Activated CD4-positive, alpha-beta T cell treated with anti-CD3 and anti-CD28 coated beads, Interleukin-2, amount 10 ng/mL, durations not matched to agents 7 days and 5 days (primary cell): ENCODE measurements at regions of chr19 and their contacts with region 1.

Region 1: DNA sequence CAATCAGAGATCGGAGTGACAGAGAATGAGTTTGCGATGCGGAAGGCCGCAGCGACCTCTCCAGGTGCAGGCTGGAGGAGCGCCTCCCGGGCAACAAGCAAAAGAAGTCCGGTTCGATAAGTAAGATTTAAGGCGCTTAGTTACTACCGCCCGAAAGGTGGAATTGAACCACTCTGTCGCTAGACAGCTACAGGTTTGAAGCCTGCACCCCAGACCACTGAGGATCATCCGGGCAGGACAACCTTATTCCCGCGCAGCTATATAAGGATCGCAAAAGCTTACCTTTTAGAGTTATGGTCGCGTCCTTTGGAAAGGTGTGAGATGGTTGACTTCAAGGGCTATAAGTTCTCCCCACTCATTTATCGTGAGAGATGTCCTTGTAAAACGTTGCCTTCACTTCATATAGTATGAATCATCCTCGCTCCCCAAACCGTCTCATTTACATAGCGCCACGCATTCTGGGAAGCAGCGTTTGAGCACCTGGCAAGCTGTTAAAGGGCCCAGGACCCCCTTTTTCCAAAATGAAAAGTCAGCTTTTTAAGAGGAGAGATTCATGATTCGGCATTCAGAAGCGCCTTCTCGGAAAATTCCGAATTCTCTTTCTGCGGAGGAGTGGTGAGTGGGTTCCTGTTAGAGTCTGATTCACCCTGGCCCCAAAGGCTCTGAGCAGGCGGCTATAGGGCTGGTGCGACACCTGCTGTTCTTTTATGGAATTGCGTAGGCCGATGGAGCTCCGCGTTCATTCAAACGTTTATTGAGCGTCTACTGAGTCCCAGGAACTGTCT is 10.8 kb downstream of the FOSB start:
- DNase-seq: peak; percentile 91
- H3K4me3 Mint-ChIP-seq: peak overlapping the region; percentile 81
- H3K27ac Mint-ChIP-seq: peak overlapping the region; percentile 98
- H3K4me1 Mint-ChIP-seq: peaks cover 44% of the 10 kb centered on the region
- H3K27me3 Mint-ChIP-seq: peaks cover 30% of the 10 kb centered on the region

Region 2: GRCh38 chr19:45391871-45392665 is 86.6 kb before region 1 on chr19:
- CTCF ChIA-PET with region 1: no interaction called
- POLR2A ChIA-PET with region 1: no interaction called
- DNase-seq: no peak
- H3K4me3 Mint-ChIP-seq: no peak overlapping the region
- H3K27ac Mint-ChIP-seq: no peak overlapping the region
- H3K4me1 Mint-ChIP-seq: peaks cover 5% of the 10 kb centered on the region
- H3K27me3 Mint-ChIP-seq: peaks cover 12% of the 10 kb centered on the region

Region 3: GRCh38 chr19:45405435-45406225 is 73.0 kb before region 1 on chr19:
- CTCF ChIA-PET with region 1: interaction called, 32 read pairs
- POLR2A ChIA-PET with region 1: no interaction called
- DNase-seq: peak; percentile 88
- H3K4me3 Mint-ChIP-seq: peak overlapping the region; percentile 85
- H3K27ac Mint-ChIP-seq: peak overlapping the region; percentile 95
- H3K4me1 Mint-ChIP-seq: peaks cover 43% of the 10 kb centered on the region
- H3K27me3 Mint-ChIP-seq: peaks cover 19% of the 10 kb centered on the region

Region 4: DNA sequence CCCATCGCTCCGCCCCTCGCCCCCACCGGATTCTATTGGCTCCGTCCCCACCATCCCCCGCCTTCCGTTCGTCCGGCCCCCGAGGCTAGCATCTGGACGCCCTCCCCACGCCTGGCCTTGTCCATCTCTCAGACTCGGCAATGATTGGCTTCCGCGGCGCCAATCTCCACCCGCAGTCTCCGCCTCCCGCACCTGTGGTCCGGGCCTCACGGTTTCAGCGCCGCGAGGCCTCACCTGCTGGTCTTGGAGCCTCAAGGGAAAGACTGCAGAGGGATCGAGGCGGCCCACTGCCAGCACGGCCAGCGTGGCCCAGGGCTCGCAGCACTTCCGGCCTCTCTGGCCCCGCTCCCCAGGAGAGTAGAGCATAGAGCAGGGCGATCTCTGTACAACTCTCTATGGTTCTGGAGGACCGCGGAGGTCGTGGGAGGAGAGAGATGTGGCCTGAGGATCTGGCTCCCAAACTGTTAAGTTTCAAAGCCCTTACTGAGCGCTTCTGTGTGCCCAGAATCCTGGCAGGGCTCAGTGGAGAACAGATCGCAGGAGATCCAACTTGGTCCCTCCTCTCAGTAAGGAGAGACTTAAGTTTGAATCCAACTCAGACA is 55.0 kb before region 1 on chr19 and contains the start of gene ERCC1:
- CTCF ChIA-PET with region 1: interaction called, 31 read pairs
- POLR2A ChIA-PET with region 1: no interaction called
- DNase-seq: peak; percentile 89
- H3K4me3 Mint-ChIP-seq: peak within 1 kb of the TSS; percentile 85
- H3K27ac Mint-ChIP-seq: peak within 1 kb of the TSS; percentile 86
- H3K4me1 Mint-ChIP-seq: peaks cover 65% of the 10 kb centered on the region
- H3K27me3 Mint-ChIP-seq: peaks cover 7% of the 10 kb centered on the region
- total RNA-seq, gene ERCC1: 59.9 to 66.1 TPM

Region 5: GRCh38 chr19:45450012-45450333 is 28.7 kb before region 1 on chr19:
- CTCF ChIA-PET with region 1: interaction called, 28 read pairs
- POLR2A ChIA-PET with region 1: interaction called, 3 read pairs
- DNase-seq: peak; percentile 28
- H3K4me3 Mint-ChIP-seq: peak overlapping the region; percentile 90
- H3K27ac Mint-ChIP-seq: peak overlapping the region; percentile 98
- H3K4me1 Mint-ChIP-seq: peaks cover 43% of the 10 kb centered on the region
- H3K27me3 Mint-ChIP-seq: no peaks in the 10 kb centered on the region

Region 6: DNA sequence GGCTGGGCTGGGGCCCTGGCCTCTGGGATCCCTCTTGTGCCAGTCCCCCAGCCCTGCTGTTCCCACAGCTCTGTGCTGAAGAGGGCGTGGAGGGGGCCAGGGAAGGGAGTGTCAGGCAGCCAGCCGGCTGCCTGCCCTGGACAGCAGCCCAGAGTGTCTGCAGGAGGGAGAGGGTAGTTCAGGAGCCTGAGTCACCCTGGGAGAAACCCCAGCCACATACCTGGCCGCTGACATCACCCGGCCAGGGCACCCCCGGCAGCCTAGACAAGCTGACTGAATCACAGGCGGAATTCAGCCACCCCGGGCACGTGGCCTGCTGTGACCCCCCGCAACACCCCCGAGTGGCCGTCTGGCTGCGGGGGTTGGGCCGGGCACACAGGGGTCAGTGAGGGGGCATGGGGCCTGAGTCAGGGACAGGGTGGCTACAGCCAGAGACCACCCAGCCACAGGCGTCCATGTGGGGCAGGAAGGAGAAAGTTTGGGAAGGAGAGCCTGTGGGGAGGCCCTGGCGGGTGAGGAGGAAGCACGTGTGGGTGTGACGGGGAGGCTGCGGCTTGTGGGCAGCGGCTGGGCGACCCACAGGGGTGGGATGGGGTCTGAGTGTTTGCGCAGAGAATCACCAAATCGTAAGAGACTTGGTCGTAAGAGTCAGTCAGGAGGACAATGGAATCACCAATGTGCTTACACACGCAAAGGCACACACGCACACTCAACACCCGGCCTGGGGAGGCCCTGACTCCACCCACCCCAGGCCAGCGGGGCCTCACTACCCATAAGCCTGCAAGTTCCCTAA is 22.7 kb before region 1 on chr19:
- CTCF ChIA-PET with region 1: interaction called, 28 read pairs
- POLR2A ChIA-PET with region 1: no interaction called
- DNase-seq: no peak
- H3K4me3 Mint-ChIP-seq: no peak overlapping the region
- H3K27ac Mint-ChIP-seq: no peak overlapping the region
- H3K4me1 Mint-ChIP-seq: peaks cover 28% of the 10 kb centered on the region
- H3K27me3 Mint-ChIP-seq: peaks cover 4% of the 10 kb centered on the region

Region 7: GRCh38 chr19:45496349-45496953 is 17.8 kb after region 1 on chr19:
- CTCF ChIA-PET with region 1: interaction called, 26 read pairs
- POLR2A ChIA-PET with region 1: no interaction called
- DNase-seq: peak; percentile 55
- H3K4me3 Mint-ChIP-seq: peak overlapping the region; percentile 50
- H3K27ac Mint-ChIP-seq: no peak overlapping the region
- H3K4me1 Mint-ChIP-seq: peaks cover 43% of the 10 kb centered on the region
- H3K27me3 Mint-ChIP-seq: peaks cover 35% of the 10 kb centered on the region

Region 8: GRCh38 chr19:45558399-45558878 is 79.8 kb after region 1 on chr19:
- CTCF ChIA-PET with region 1: interaction called, 10 read pairs
- POLR2A ChIA-PET with region 1: no interaction called
- DNase-seq: peak; percentile 83
- H3K4me3 Mint-ChIP-seq: no peak overlapping the region
- H3K27ac Mint-ChIP-seq: no peak overlapping the region
- H3K4me1 Mint-ChIP-seq: peaks cover 24% of the 10 kb centered on the region
- H3K27me3 Mint-ChIP-seq: no peaks in the 10 kb centered on the region

Region 9: GRCh38 chr19:45577111-45577905 is 98.7 kb after region 1 on chr19:
- CTCF ChIA-PET with region 1: no interaction called
- POLR2A ChIA-PET with region 1: no interaction called
- DNase-seq: no peak
- H3K4me3 Mint-ChIP-seq: no peak overlapping the region
- H3K27ac Mint-ChIP-seq: no peak overlapping the region
- H3K4me1 Mint-ChIP-seq: peaks cover 16% of the 10 kb centered on the region
- H3K27me3 Mint-ChIP-seq: no peaks in the 10 kb centered on the region